ENCODE measurements at regions of chr2 and their contacts with region 1.

Region 1: GRCh38 chr2:12488352-12489318 is 228.1 kb upstream of the TRIB2 start:
- DNase-seq: peak in 8 of 9 experiments; percentile 28 to 78 (median 56)
- ATAC-seq: peak; percentile 93
- H3K4me3 ChIP-seq: peak overlapping the region; percentile 2 to 13
- H3K4me3 Mint-ChIP-seq: peak overlapping the region; percentile 62
- H3K27ac ChIP-seq: peak overlapping the region in 1 of 2 experiments; percentile 59
- H3K27ac Mint-ChIP-seq: peak overlapping the region; percentile 84
- H3K4me1 ChIP-seq: peaks cover 41% of the 10 kb centered on the region
- H3K4me1 Mint-ChIP-seq: peaks cover 73% of the 10 kb centered on the region
- H3K27me3 ChIP-seq: no peaks in the 10 kb centered on the region
- H3K27me3 Mint-ChIP-seq: no peaks in the 10 kb centered on the region
- CTCF ChIP-seq: no peak

Region 2: DNA sequence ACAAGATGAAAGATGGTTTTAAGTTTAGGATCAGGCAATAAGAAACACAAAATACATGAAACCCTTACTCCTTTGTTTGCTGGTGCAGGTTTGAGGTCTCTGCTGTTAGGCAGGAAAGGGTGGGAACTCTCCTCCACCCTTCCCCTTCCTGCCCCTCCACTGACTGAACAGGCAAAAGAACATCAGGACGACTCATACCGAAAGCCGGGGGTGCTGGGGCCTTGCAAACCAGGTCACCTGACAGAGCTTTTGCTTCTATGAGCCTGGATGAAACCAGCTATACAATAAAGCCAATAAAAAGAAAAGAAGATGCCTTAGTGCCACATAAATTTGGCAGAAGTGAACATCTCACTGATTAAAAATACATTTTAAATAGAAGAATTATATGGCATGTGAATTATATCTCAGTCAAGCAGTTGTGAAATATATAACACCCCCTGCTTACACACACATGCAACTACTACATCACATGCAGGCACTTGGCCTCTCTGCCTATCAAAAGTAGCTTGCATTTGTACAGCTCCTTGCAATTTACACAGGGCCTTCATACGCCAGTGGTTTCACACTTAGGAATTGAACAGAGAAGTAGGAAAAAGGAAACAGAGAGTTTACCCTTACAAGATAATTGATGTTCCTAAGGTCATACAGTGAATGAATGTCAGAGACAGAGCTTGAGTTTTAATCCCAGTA is 13.0 kb after region 1 on chr2:
- CTCF ChIA-PET with region 1: interaction called, 4 read pairs
- POLR2A ChIA-PET with region 1: interaction called, 13 read pairs
- intact Hi-C with region 1: loop called in 1 of 2 experiments (anchors 1 kb)
- DNase-seq: peak in 8 of 9 experiments; percentile 45 to 84 (median 63)
- ATAC-seq: peak; percentile 85
- H3K4me3 ChIP-seq: no peak overlapping the region
- H3K4me3 Mint-ChIP-seq: peak overlapping the region; percentile 65
- H3K27ac ChIP-seq: peak overlapping the region; percentile 36 to 80
- H3K27ac Mint-ChIP-seq: peak overlapping the region; percentile 91
- H3K4me1 ChIP-seq: peaks cover 95% of the 10 kb centered on the region
- H3K4me1 Mint-ChIP-seq: peaks cover 98% of the 10 kb centered on the region
- H3K27me3 ChIP-seq: no peaks in the 10 kb centered on the region
- H3K27me3 Mint-ChIP-seq: no peaks in the 10 kb centered on the region
- CTCF ChIP-seq: no peak

Measured in CD8-positive, alpha-beta T cell (primary cell).